Left ventricle myocardium superior (tissue), 1 donor: ENCODE measurements at regions of chr15 and their contacts with region 1.

Region 1: GRCh38 chr15:89874926-89875564 is 18.7 kb downstream of the AP3S2 start:
- DNase-seq: peak; percentile 91
- ATAC-seq: peak; percentile 93

Region 2: DNA sequence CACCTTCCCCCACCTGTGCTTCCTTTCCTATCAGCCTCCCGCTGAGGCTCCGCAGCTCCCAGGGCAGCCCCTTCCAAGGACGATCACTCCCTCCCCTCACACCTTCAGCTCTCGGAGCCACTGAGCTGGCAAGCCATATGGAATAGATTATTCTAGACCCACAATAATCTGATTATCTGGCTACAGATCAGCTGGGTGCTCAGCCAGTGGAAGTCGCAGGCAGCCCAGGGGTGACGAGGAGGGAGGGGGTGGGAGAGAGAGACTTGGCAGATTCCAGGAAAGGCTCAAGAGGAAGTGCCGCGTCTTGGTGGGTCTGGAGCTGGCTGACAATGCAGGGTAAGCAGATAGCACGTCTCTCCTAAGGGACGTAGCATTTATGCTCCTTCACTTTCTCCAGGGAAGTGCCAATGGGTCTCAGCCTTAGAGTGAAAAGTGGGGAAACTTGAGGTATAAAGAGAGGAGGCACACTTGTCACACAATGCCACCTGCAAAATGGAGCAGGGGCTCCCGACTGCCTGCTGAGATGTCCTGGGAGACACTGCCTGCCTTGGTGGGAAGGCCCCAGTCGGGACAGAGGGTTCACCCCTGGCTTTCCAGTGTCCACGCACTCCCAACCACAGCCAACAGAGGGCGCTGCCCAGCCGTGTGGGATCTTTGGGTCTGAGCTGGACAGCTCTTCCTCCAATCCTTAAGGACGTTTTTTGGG is 114.6 kb before region 1 on chr15:
- intact Hi-C with region 1: loop called (anchors 2 kb)
- DNase-seq: peak; percentile 91
- ATAC-seq: peak; percentile 94

Region 3: DNA sequence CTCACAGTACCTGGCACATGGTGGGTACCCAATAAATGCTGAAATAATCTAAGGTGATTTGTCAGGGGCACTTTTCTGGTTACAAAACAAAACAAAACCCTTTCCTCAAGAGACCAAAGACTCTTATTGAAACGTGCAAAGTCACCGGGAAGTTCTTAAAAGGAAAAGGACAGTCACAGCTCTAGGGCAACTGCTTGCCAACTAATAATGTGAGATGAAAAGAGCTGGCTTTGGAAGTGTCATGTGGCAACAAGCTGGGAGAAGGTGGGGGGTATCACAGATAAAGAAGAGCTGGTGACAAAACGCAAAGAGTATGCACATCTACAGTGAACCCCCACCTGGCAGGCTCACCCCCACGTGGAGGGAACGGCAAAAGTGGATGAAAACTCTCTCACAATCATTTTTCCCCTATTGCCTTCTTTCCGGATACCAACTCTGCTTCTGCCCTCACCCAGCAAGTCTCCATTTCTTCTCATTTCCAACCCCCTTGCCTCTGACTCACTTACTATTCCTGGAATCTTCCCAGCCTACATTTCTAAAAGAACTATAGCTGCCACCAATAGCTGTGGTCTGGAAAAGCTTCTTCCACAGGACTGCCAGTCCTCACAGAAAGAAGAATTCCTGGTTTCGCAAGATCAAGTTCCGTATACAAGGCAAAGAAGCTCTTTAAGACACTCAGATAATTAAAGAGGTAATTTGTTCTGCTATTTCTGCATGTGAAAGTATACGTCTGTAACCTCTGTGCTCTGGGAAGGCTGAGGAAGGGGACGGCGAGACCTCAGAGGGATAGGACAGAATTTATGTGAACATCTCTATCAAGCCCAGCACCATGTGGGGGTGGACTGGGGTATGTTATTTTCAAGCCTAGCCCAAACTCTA is 38.6 kb before region 1 on chr15:
- intact Hi-C with region 1: no loop called
- DNase-seq: no peak
- ATAC-seq: peak; percentile 77

Region 4: GRCh38 chr15:90138071-90138833 is 263.2 kb after region 1 on chr15:
- intact Hi-C with region 1: no loop called
- DNase-seq: peak; percentile 69
- ATAC-seq: peak; percentile 91